A549 (cell line): ENCODE measurements at regions of chr15 and their contacts with region 1.

Region 1: GRCh38 chr15:77821188-77821958 is 188.7 kb upstream of the LINGO1 start:
- DNase-seq: peak; percentile 77 to 93
- ATAC-seq: peak; percentile 76 to 92
- H3K4me3 ChIP-seq: no peak overlapping the region
- H3K27ac ChIP-seq: no peak overlapping the region
- H3K4me1 ChIP-seq: peaks cover 8% of the 10 kb centered on the region; the same call in 1 of the 3 replicates
- CTCF ChIP-seq: peak; percentile 81
- EP300 ChIP-seq: no peak
- POLR2A ChIP-seq: no peak
- RAD21 ChIP-seq: peak; percentile 90 to 95

Region 2: GRCh38 chr15:77118882-77119321 is 702.5 kb before region 1 on chr15:
- CTCF ChIA-PET with region 1: interaction called, 22 read pairs
- POLR2A ChIA-PET with region 1: no interaction called
- DNase-seq: peak; percentile 64 to 74
- ATAC-seq: peak; percentile 83 to 93
- H3K4me3 ChIP-seq: no peak overlapping the region
- H3K27ac ChIP-seq: no peak overlapping the region
- H3K4me1 ChIP-seq: no peaks in the 10 kb centered on the region
- CTCF ChIP-seq: peak; percentile 96
- EP300 ChIP-seq: no peak
- POLR2A ChIP-seq: no peak
- RAD21 ChIP-seq: peak; percentile 93

Region 3: DNA sequence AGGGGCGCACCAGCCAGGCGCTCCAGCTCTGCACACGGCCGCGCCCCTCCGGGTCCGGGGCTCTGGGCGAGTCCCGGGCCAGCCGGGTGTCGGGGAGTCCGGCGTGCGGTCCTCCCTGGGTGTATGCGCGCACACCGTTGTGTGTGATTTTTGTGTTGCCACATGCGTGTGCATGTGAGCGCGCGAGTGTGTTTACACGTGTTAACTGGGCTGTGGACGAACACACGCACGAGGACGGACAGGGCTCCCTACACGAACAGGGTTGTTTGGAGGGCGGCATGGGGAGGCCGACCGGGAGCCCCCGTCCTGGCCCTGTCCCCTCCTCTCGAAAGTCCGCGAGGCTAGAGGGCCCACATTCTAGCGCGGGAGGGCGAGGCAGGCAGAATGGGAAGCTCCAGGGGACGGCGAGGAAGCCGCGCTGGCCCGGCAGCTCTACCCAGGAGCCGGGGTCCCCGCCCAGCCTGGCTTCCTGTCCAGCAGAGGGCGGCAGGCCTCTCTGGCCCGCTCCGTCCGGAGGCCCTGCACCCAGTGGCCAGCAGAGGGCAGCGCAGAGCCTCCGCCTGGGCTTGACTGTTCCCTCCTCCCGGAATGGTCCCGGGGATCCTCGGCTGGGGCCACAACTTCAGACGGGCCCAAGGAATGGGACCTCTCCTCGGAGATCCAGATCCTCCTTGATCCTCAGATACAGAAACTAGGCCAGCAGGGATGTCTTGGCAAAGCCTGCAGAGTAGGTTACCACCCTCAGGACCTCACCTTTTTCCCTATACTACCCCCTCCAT is 188.1 kb before region 1 on chr15:
- CTCF ChIA-PET with region 1: interaction called, 271 read pairs
- POLR2A ChIA-PET with region 1: interaction called, 8 read pairs
- DNase-seq: peak; percentile 90 to 95
- ATAC-seq: peak; percentile 70 to 94
- H3K4me3 ChIP-seq: peak overlapping the region; percentile 50
- H3K27ac ChIP-seq: peak overlapping the region; percentile 55 to 88; a peak in 5 of 6 replicates
- H3K4me1 ChIP-seq: peaks cover 10% of the 10 kb centered on the region; the same call in 1 of the 3 replicates
- CTCF ChIP-seq: peak; percentile 100
- EP300 ChIP-seq: no peak
- POLR2A ChIP-seq: no peak; the same call in 1 of the 2 replicates
- RAD21 ChIP-seq: peak; percentile 76 to 86

Region 4: DNA sequence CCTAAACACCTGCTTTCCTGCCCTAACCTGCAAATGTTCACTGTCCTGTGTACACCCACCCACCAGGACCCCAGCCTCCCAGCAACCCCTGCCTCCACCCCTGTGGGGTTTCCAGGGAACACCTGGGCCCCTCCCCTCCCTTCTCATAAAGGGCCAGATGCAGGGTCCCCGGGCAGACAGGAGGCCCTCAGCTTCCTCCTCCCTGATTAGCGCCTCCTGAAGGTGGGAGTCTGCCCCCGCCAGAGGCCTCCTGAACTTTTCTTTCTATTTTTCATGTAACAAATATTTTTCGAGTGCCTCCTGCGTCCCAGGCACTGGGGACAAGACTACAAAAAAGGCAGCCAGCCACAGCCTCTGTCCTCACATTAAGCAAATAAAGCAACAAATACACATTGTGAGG is 53.3 kb before region 1 on chr15:
- CTCF ChIA-PET with region 1: interaction called, 10 read pairs
- POLR2A ChIA-PET with region 1: no interaction called
- DNase-seq: no peak
- ATAC-seq: no peak
- H3K4me3 ChIP-seq: no peak overlapping the region
- H3K27ac ChIP-seq: no peak overlapping the region
- H3K4me1 ChIP-seq: no peaks in the 10 kb centered on the region
- CTCF ChIP-seq: no peak
- EP300 ChIP-seq: no peak
- POLR2A ChIP-seq: no peak
- RAD21 ChIP-seq: no peak

Region 5: GRCh38 chr15:77810130-77810571 is 11.2 kb before region 1 on chr15:
- CTCF ChIA-PET with region 1: interaction called, 35 read pairs
- POLR2A ChIA-PET with region 1: no interaction called
- DNase-seq: no peak
- ATAC-seq: no peak; a peak in 1 of 6 replicates
- H3K4me3 ChIP-seq: no peak overlapping the region
- H3K27ac ChIP-seq: no peak overlapping the region
- H3K4me1 ChIP-seq: no peaks in the 10 kb centered on the region
- CTCF ChIP-seq: no peak
- EP300 ChIP-seq: no peak
- POLR2A ChIP-seq: no peak
- RAD21 ChIP-seq: no peak

Region 6: GRCh38 chr15:78204351-78205309 is 383.3 kb after region 1 on chr15:
- CTCF ChIA-PET with region 1: no interaction called
- POLR2A ChIA-PET with region 1: no interaction called
- DNase-seq: no peak
- ATAC-seq: no peak; a peak in 1 of 6 replicates
- H3K4me3 ChIP-seq: no peak overlapping the region
- H3K27ac ChIP-seq: no peak overlapping the region
- H3K4me1 ChIP-seq: 0 out of 3 replicates have a peak, but pooled peaks cover 3% of the 10 kb centered on the region
- CTCF ChIP-seq: no peak
- EP300 ChIP-seq: no peak
- POLR2A ChIP-seq: no peak
- RAD21 ChIP-seq: no peak